Activated naive CD4-positive, alpha-beta T cell treated with anti-CD3 and anti-CD28 coated beads for 36 hours (primary cell): ENCODE measurements at regions of chr15 and their contacts with region 1.

Region 1: GRCh38 chr15:27017168-27017809 is 46.3 kb downstream of the GABRG3 start:
- DNase-seq: peak; percentile 61
- H3K4me3 Mint-ChIP-seq: no peak overlapping the region
- H3K27ac Mint-ChIP-seq: no peak overlapping the region
- H3K4me1 Mint-ChIP-seq: no peaks in the 10 kb centered on the region
- H3K27me3 Mint-ChIP-seq: peaks cover 5% of the 10 kb centered on the region

Region 2: GRCh38 chr15:26891448-26892181 is 125.7 kb before region 1 on chr15:
- CTCF ChIA-PET with region 1: interaction called, 5 read pairs
- intact Hi-C with region 1: loop called (anchors 1 kb)
- DNase-seq: peak; percentile 77
- H3K4me3 Mint-ChIP-seq: no peak overlapping the region
- H3K27ac Mint-ChIP-seq: no peak overlapping the region
- H3K4me1 Mint-ChIP-seq: peaks cover 4% of the 10 kb centered on the region
- H3K27me3 Mint-ChIP-seq: peaks cover 30% of the 10 kb centered on the region